ENCODE measurements at regions of chr10 and their contacts with region 1.

Region 1: GRCh38 chr10:15411010-15411409 is 39.9 kb upstream of the FAM171A1 start:
- DNase-seq: no peak
- H3K4me3 ChIP-seq: no peak overlapping the region
- H3K27ac ChIP-seq: no peak overlapping the region
- H3K4me1 ChIP-seq: no peaks in the 10 kb centered on the region
- H3K27me3 ChIP-seq: no peaks in the 10 kb centered on the region; the same call in 1 of the 2 replicates
- CTCF ChIP-seq: no peak

Region 2: GRCh38 chr10:16794005-16794404 is 1383.0 kb after region 1 on chr10:
- CTCF ChIA-PET with region 1: interaction called, 11 read pairs
- POLR2A ChIA-PET with region 1: no interaction called
- intact Hi-C with region 1: no loop called
- DNase-seq: no peak
- H3K4me3 ChIP-seq: no peak overlapping the region
- H3K27ac ChIP-seq: no peak overlapping the region
- H3K4me1 ChIP-seq: no peaks in the 10 kb centered on the region
- H3K27me3 ChIP-seq: no peaks in the 10 kb centered on the region
- CTCF ChIP-seq: no peak